CD4-positive, alpha-beta T cell (primary cell): ENCODE measurements at regions of chr10 and their contacts with region 1.

Region 1: DNA sequence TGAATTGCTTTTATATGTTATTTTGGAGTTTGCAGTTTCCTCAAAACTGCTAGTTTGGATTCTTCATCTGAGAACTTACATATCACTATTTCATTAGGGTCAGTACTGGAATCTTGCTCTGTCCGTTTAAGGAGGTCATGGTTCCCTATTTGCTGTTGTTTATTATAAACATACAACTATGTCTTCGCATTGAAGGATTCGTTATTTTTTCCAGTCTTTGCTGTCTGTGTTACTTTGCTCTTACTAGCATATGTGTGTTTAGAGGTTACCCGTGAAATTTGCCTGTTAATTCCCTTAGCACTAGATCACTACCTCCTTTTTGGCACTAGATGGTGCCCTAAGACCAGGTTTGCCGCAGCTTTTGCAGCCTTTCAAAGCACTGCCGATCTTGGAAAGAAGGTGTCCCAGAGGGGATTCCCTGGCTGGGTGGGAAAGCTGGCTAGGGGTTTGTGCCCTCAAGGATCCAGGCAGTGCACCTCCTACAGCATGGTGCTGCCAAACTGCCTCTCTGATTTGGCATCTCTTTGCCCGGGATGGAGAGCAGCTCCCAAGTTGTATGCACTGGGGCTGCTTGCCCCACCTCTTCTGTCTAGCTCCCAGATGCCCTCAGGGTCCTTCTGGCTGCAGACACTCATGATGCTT is 103.1 kb upstream of the APBB1IP start:
- DNase-seq: peak; percentile 43 to 85 (median 55)
- ATAC-seq: peak; percentile 91
- H3K4me3 ChIP-seq: peak overlapping the region; percentile 51
- H3K4me3 Mint-ChIP-seq: peak overlapping the region; percentile 72
- H3K27ac ChIP-seq: no peak overlapping the region
- H3K27ac Mint-ChIP-seq: no peak overlapping the region
- H3K4me1 ChIP-seq: peaks cover 5% of the 10 kb centered on the region
- H3K4me1 Mint-ChIP-seq: no peaks in the 10 kb centered on the region
- H3K27me3 ChIP-seq: no peaks in the 10 kb centered on the region
- H3K27me3 Mint-ChIP-seq: no peaks in the 10 kb centered on the region
- CTCF ChIP-seq: peak; percentile 86

Region 2: DNA sequence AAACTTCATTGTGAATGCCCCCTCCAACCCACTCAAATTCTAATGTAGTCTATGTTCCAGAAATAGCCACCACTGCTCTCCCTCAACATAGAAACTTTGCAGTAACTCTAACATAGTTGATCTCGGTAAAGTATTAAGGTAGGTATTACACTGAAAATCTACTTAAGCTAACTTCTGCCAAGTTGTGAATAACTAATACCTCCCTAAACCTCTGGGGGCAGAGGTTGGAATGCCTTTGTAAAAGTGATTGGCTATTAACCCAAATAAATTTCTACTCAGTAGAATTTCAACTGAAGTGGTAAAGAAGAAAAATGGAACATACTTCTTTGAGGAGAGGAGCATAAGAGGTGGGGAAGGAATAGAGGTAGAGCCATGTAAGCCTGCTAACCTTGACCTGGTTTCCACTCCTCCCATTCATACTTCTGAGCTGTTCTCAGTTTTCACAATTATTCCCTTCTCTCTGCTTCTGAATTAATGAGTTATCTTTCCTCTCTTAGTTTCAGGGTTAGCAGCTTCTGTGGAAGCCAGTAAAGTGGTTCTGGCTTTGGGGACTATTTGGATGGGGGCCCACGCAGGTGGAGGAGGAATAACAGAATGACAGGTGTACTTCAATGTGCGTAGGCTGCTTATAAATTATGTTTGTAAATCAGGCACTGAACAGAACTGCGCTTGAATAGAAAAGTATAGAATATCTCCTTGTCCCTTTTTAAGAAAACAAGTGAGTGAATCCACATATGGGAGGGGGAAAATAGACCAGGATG is 247.6 kb before region 1 on chr10:
- CTCF ChIA-PET with region 1: no interaction called
- POLR2A ChIA-PET with region 1: no interaction called
- intact Hi-C with region 1: no loop called
- DNase-seq: no peak
- ATAC-seq: no peak
- H3K4me3 ChIP-seq: no peak overlapping the region
- H3K4me3 Mint-ChIP-seq: no peak overlapping the region
- H3K27ac ChIP-seq: no peak overlapping the region
- H3K27ac Mint-ChIP-seq: no peak overlapping the region
- H3K4me1 ChIP-seq: no peaks in the 10 kb centered on the region
- H3K4me1 Mint-ChIP-seq: no peaks in the 10 kb centered on the region
- H3K27me3 ChIP-seq: peaks cover 0 to 10% of the 10 kb centered on the region in 2 experiments
- H3K27me3 Mint-ChIP-seq: peaks cover 31% of the 10 kb centered on the region
- CTCF ChIP-seq: no peak

Region 3: GRCh38 chr10:26430641-26431164 is 95.7 kb after region 1 on chr10:
- CTCF ChIA-PET with region 1: interaction called, 3 read pairs
- POLR2A ChIA-PET with region 1: interaction called, 4 read pairs
- intact Hi-C with region 1: loop called in 1 of 2 experiments (anchors 5 kb)
- DNase-seq: peak in 3 of 14 experiments; percentile 68 to 81 (median 74)
- ATAC-seq: peak; percentile 39
- H3K4me3 ChIP-seq: peak overlapping the region; percentile 19
- H3K4me3 Mint-ChIP-seq: no peak overlapping the region
- H3K27ac ChIP-seq: peak overlapping the region in 1 of 2 donors; percentile 49
- H3K27ac Mint-ChIP-seq: peak overlapping the region; percentile 43
- H3K4me1 ChIP-seq: peaks cover 17% of the 10 kb centered on the region
- H3K4me1 Mint-ChIP-seq: peaks cover 27% of the 10 kb centered on the region
- H3K27me3 ChIP-seq: no peaks in the 10 kb centered on the region
- H3K27me3 Mint-ChIP-seq: no peaks in the 10 kb centered on the region
- CTCF ChIP-seq: no peak

Region 4: GRCh38 chr10:26503911-26504310 is 168.9 kb after region 1 on chr10:
- CTCF ChIA-PET with region 1: interaction called, 5 read pairs
- POLR2A ChIA-PET with region 1: no interaction called
- intact Hi-C with region 1: loop called in 1 of 2 experiments (anchors 5 kb)
- DNase-seq: peak in 11 of 14 experiments; percentile 16 to 57 (median 28)
- ATAC-seq: peak; percentile 52
- H3K4me3 ChIP-seq: no peak overlapping the region
- H3K4me3 Mint-ChIP-seq: no peak overlapping the region
- H3K27ac ChIP-seq: no peak overlapping the region
- H3K27ac Mint-ChIP-seq: peak overlapping the region; percentile 69
- H3K4me1 ChIP-seq: peaks cover 4% of the 10 kb centered on the region
- H3K4me1 Mint-ChIP-seq: peaks cover 46% of the 10 kb centered on the region
- H3K27me3 ChIP-seq: no peaks in the 10 kb centered on the region
- H3K27me3 Mint-ChIP-seq: no peaks in the 10 kb centered on the region
- CTCF ChIP-seq: peak; percentile 57

Region 5: DNA sequence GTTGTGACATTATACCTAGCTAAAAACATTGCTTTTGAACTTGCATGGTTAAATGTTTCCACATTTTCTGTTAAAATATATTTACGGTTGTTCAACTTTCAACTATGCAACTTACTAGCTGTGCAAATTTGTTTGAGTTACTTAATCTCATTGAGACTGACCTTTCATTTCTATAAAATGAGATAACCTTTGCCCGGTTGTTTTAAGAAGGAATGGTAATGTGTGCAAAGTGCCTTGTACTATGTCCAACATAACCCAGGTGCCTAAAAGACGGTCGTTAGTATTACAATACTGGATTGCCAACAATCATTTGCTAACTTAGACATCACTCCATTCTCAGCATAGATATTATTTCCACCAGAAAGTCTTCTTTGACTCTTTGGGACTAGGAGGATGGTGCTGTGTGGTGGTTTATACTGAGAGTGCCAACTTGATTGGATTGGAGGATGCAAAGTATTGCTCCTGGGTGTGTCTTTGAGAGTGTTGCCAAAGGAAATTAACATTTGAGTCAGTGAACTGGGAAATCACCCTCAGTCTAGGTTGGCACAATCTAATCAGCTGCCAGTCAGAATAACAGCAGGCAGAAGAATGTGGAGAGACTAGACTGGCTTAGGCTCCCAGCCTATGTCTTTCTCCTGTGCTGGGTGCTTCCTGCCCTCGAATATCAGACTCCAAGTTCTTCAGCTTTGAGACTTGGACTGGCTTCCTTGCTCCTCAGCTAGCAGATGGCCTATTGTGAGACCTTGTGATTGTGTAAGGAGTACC is 277.3 kb after region 1 on chr10:
- CTCF ChIA-PET with region 1: no interaction called
- POLR2A ChIA-PET with region 1: no interaction called
- intact Hi-C with region 1: loop called in 1 of 2 experiments (anchors 5 kb)
- DNase-seq: no peak
- ATAC-seq: no peak
- H3K4me3 ChIP-seq: no peak overlapping the region
- H3K4me3 Mint-ChIP-seq: no peak overlapping the region
- H3K27ac ChIP-seq: no peak overlapping the region
- H3K27ac Mint-ChIP-seq: no peak overlapping the region
- H3K4me1 ChIP-seq: no peaks in the 10 kb centered on the region
- H3K4me1 Mint-ChIP-seq: no peaks in the 10 kb centered on the region
- H3K27me3 ChIP-seq: no peaks in the 10 kb centered on the region
- H3K27me3 Mint-ChIP-seq: no peaks in the 10 kb centered on the region
- CTCF ChIP-seq: no peak

Region 6: GRCh38 chr10:26881600-26882331 is 546.7 kb after region 1 on chr10:
- CTCF ChIA-PET with region 1: interaction called, 3 read pairs
- POLR2A ChIA-PET with region 1: no interaction called
- intact Hi-C with region 1: loop called (anchors 2 kb)
- DNase-seq: peak in 4 of 14 experiments; percentile 22 to 78 (median 60)
- ATAC-seq: peak; percentile 92
- H3K4me3 ChIP-seq: no peak overlapping the region
- H3K4me3 Mint-ChIP-seq: no peak overlapping the region
- H3K27ac ChIP-seq: no peak overlapping the region
- H3K27ac Mint-ChIP-seq: no peak overlapping the region
- H3K4me1 ChIP-seq: no peaks in the 10 kb centered on the region
- H3K4me1 Mint-ChIP-seq: no peaks in the 10 kb centered on the region
- H3K27me3 ChIP-seq: peaks cover 0 to 4% of the 10 kb centered on the region in 2 experiments
- H3K27me3 Mint-ChIP-seq: peaks cover 12% of the 10 kb centered on the region
- CTCF ChIP-seq: peak; percentile 85

Region 7: GRCh38 chr10:27360581-27361172 is 1025.6 kb after region 1 on chr10:
- CTCF ChIA-PET with region 1: no interaction called
- POLR2A ChIA-PET with region 1: no interaction called
- intact Hi-C with region 1: loop called (anchors 5 to 10 kb)
- DNase-seq: peak; percentile 70 to 90 (median 78)
- ATAC-seq: peak; percentile 100
- H3K4me3 ChIP-seq: no peak overlapping the region
- H3K4me3 Mint-ChIP-seq: no peak overlapping the region
- H3K27ac ChIP-seq: no peak overlapping the region
- H3K27ac Mint-ChIP-seq: no peak overlapping the region
- H3K4me1 ChIP-seq: no peaks in the 10 kb centered on the region
- H3K4me1 Mint-ChIP-seq: no peaks in the 10 kb centered on the region
- H3K27me3 ChIP-seq: no peaks in the 10 kb centered on the region
- H3K27me3 Mint-ChIP-seq: no peaks in the 10 kb centered on the region
- CTCF ChIP-seq: peak; percentile 93